ENCODE measurements at regions of chr1 and their contacts with region 1.

Region 1: DNA sequence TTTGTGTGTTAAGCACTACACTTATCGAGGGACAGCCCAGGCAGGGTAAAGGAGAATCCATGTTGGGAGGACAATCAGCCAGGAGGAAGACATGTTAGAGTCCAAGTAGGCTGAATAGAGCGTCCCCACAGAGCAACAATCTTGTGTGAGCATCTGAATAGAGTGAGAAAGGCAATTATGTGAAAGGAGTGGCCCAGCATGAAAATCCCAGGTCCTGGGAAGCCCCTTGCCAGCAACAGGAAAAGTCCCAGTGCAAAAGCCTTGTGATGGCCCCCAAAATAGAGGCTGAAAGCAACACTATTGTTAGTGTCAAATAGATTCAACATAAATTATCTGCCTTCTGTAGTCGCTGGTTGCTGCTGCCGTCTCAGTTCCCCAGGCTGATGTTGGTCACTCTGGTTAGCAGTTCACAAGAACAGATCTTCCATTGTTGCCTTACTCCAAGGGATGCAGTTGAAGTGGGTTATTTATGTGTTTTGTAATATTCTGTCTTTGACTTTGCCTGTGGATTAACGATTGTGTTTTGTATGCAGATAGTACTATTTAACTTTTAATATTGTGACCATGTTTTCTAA is 12.1 kb upstream of the ABL2 start:
- DNase-seq: no peak
- H3K4me3 ChIP-seq: no peak overlapping the region
- H3K27ac ChIP-seq: no peak overlapping the region
- H3K4me1 ChIP-seq: no peaks in the 10 kb centered on the region
- H3K27me3 ChIP-seq: no peaks in the 10 kb centered on the region
- CTCF ChIP-seq: no peak

Region 2: GRCh38 chr1:179094823-179095222 is 146.8 kb before region 1 on chr1:
- CTCF ChIA-PET with region 1: no interaction called
- POLR2A ChIA-PET with region 1: interaction called, 13 read pairs
- intact Hi-C with region 1: no loop called
- DNase-seq: no peak
- H3K4me3 ChIP-seq: no peak overlapping the region
- H3K27ac ChIP-seq: no peak overlapping the region
- H3K4me1 ChIP-seq: 0 out of 2 replicates have a peak, but pooled peaks cover 4% of the 10 kb centered on the region
- H3K27me3 ChIP-seq: no peaks in the 10 kb centered on the region
- CTCF ChIP-seq: no peak

Measured in PC-9 (cell line).